ENCODE measurements at regions of chr10 and their contacts with region 1.

Region 1: GRCh38 chr10:70903262-70903921 is 15.0 kb upstream of the PCBD1 start:
- DNase-seq: peak; percentile 83
- ATAC-seq: peak; percentile 83
- H3K4me3 Mint-ChIP-seq: no peak overlapping the region
- H3K27ac Mint-ChIP-seq: no peak overlapping the region
- H3K4me1 Mint-ChIP-seq: peaks cover 9% of the 10 kb centered on the region
- H3K27me3 Mint-ChIP-seq: no peaks in the 10 kb centered on the region; the same call in 1 of the 2 replicates
- CTCF ChIP-seq: peak; percentile 90

Region 2: GRCh38 chr10:70925377-70926225 is 22.2 kb after region 1 on chr10:
- CTCF ChIA-PET with region 1: interaction called, 47 read pairs
- POLR2A ChIA-PET with region 1: no interaction called
- DNase-seq: peak; percentile 77
- ATAC-seq: peak; percentile 89
- H3K4me3 Mint-ChIP-seq: no peak overlapping the region
- H3K27ac Mint-ChIP-seq: no peak overlapping the region
- H3K4me1 Mint-ChIP-seq: no peaks in the 10 kb centered on the region
- H3K27me3 Mint-ChIP-seq: no peaks in the 10 kb centered on the region; the same call in 1 of the 2 replicates
- CTCF ChIP-seq: peak; percentile 95

Region 3: DNA sequence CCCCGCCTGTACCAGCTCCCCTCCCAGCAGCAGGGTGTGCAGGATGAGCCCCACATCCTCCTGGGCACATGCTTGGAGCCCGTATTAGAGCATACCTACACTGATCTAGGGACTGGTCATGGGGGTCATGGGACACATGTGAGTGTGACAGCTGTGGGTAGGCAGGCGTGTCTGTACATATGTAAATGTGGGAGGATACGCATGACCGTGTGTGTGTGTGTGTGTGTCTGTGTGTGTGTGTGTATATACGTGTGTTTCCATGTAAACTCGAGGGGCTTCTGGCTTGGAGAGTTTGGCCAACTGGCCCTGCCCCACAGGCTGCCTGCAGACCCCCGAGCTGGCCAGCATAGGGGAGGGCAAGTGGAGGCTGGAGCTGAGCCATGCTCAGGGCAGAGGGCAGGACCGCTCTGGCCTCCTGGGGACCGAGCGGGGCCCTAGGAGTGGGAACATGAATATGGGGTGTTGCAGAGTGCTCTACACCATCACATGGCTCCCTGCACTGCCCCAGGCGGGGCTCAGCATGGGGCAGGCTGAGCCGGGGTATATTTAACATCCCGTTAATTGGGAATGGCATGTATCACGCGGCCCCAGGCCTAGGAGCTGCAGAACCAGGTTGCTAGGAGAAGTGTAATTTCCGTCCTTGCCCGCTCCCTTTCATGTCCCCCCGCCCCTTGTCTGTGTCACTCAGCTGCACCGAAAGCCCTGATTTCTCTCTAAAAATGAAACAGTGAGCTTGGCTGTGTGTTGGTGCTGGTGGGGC is 137.6 kb after region 1 on chr10:
- CTCF ChIA-PET with region 1: interaction called, 10 read pairs
- POLR2A ChIA-PET with region 1: no interaction called
- DNase-seq: no peak
- ATAC-seq: no peak; the same call in 1 of the 2 replicates
- H3K4me3 Mint-ChIP-seq: no peak overlapping the region
- H3K27ac Mint-ChIP-seq: no peak overlapping the region
- H3K4me1 Mint-ChIP-seq: peaks cover 8% of the 10 kb centered on the region
- H3K27me3 Mint-ChIP-seq: peaks cover 3% of the 10 kb centered on the region; the same call in 1 of the 2 replicates
- CTCF ChIP-seq: no peak

Region 4: DNA sequence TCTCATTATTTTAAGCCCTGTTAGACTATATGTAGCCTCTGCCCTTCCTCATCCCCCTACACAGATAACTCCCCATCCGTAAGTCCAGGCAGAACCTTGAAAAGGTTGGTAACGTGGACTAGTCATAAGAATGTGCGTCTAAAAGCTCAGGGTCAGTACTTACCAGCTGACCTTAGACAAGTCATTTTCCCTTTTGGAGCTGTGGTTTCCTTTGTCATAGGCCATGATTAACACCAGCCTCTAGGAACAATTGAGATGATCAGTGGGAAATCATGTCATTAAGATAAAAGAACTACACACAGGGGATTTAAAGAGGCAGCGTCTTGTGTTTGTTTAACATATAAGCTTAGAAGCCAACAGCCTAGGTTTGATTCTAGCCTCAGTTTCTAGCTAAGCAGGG is 302.1 kb after region 1 on chr10:
- CTCF ChIA-PET with region 1: interaction called, 33 read pairs
- POLR2A ChIA-PET with region 1: no interaction called
- DNase-seq: no peak
- ATAC-seq: no peak
- H3K4me3 Mint-ChIP-seq: no peak overlapping the region
- H3K27ac Mint-ChIP-seq: no peak overlapping the region
- H3K4me1 Mint-ChIP-seq: peaks cover 34% of the 10 kb centered on the region
- H3K27me3 Mint-ChIP-seq: peaks cover 16% of the 10 kb centered on the region
- CTCF ChIP-seq: no peak

Region 5: DNA sequence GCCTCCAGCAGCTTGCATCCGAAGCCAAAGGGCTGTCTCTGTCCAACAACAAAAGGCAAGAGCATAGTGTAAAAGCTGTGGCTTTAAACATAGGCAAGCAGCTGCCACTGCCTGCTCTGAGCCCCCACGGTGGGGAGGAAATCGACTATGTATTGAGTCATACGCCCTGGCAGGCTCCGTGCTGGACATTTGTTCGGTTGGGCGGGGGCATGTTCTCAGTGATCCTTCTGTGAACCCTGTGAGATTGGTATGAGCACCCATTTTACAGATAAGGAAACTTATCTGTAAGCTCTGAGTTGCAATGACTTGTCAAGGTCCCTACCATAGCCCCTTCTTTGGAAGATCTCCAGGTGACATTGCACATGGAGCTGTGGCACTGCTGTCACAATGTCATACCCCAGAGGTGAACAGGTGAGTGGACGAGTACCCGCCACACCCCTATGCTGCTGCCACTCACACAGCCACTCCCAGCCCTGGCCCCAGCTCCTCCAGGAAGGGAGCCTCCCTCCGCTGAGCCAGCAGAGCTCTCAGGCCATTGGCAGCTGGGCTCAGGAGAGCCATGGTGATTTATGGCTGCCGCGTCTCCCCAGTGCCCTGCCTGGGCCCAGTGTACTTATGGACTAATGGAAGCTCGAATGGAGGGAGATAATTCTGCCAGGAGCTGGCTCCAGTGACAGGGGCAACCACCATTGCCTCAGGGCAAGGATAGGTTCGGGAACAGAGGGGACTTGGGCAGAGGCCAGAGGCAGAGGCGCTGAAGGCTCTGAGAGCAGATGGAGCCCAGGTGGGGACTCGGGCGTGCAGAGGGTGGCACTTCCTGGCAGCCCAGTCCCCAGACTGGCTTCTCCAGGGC is 352.6 kb after region 1 on chr10:
- CTCF ChIA-PET with region 1: interaction called, 17 read pairs
- POLR2A ChIA-PET with region 1: no interaction called
- DNase-seq: no peak
- ATAC-seq: no peak
- H3K4me3 Mint-ChIP-seq: no peak overlapping the region
- H3K27ac Mint-ChIP-seq: no peak overlapping the region; the same call in 1 of the 2 replicates
- H3K4me1 Mint-ChIP-seq: peaks cover 58% of the 10 kb centered on the region
- H3K27me3 Mint-ChIP-seq: no peaks in the 10 kb centered on the region
- CTCF ChIP-seq: no peak

Region 6: DNA sequence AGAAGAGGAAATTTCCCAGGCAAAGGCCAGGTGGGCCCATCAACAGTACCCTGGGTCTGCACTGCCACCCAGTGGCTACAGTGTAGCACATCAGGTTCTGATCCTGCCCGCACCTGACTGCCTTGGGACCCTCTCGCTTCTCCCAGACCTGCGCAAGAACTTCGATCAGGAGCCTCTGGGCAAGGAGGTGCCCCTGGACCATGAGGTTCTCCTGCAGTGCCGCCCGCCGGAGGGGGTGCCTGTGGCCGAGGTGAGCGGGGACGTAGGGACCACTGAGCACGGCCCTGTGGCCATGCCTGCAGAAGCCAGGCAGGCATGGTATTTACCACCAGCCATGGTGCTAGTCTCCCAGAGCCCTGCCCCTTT is 381.8 kb after region 1 on chr10:
- CTCF ChIA-PET with region 1: interaction called, 35 read pairs
- POLR2A ChIA-PET with region 1: no interaction called
- DNase-seq: peak; percentile 77
- ATAC-seq: peak; percentile 89
- H3K4me3 Mint-ChIP-seq: no peak overlapping the region
- H3K27ac Mint-ChIP-seq: no peak overlapping the region
- H3K4me1 Mint-ChIP-seq: peaks cover 7% of the 10 kb centered on the region
- H3K27me3 Mint-ChIP-seq: no peaks in the 10 kb centered on the region
- CTCF ChIP-seq: peak; percentile 75